Stomach (tissue), 19 donors: ENCODE measurements at regions of chr17 and their contacts with region 1.

Region 1: GRCh38 chr17:11296994-11297393 is 56.0 kb downstream of the SHISA6 start:
- DNase-seq: no peak
- H3K4me3 ChIP-seq: no peak overlapping the region
- H3K27ac ChIP-seq: no peak overlapping the region
- H3K4me1 ChIP-seq: no peaks in the 10 kb centered on the region
- H3K27me3 ChIP-seq: no peaks in the 10 kb centered on the region
- CTCF ChIP-seq: peak in 4 of 7 experiments; percentile 22 to 61 (median 42)
- EP300 ChIP-seq: no peak
- POLR2A ChIP-seq: no peak

Region 2: DNA sequence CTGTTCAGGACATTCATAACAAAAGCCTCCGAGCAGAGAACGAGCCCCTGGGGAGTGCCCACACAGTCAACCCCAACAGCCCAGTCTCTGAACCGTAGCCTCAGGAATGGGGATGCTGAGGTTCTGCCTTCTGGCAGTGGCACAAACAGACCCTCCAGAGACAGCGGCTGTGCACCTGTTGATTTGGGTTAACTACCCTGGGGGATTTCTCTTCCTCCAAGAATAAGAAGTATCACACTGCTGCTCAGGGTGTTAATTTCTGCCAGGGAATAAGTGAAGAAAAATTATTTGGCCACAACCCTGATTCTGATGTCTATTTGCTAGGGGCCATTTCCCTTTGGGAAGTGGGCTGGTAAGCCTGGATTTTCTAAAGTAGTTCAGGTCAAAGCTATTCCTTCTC is 408.1 kb before region 1 on chr17:
- intact Hi-C with region 1: loop called (anchors 10 kb)
- DNase-seq: no peak
- H3K4me3 ChIP-seq: no peak overlapping the region
- H3K27ac ChIP-seq: no peak overlapping the region
- H3K4me1 ChIP-seq: no peaks in the 10 kb centered on the region
- H3K27me3 ChIP-seq: no peaks in the 10 kb centered on the region
- CTCF ChIP-seq: no peak
- EP300 ChIP-seq: no peak
- POLR2A ChIP-seq: no peak

Region 3: DNA sequence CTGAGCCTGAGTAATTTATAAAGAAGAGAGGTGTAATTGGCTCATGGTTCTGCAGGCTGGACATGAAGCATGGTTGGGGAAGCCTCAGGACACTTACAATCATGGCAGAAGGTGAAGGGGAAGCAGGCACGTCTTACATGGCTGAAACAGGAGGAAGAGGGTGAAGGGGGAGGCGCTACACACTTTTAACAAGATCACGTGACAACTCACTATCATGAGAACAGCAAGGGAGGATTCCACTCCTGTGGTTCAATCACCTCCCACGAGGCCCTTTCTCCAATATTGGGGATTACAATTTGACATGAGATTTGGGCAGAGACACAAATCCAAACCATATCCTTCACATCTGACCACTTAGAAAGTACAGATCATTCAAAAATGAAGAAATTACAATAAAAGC is 166.6 kb before region 1 on chr17:
- intact Hi-C with region 1: loop called (anchors 5 kb)
- DNase-seq: no peak
- H3K4me3 ChIP-seq: no peak overlapping the region
- H3K27ac ChIP-seq: no peak overlapping the region
- H3K4me1 ChIP-seq: no peaks in the 10 kb centered on the region
- H3K27me3 ChIP-seq: no peaks in the 10 kb centered on the region
- CTCF ChIP-seq: no peak
- EP300 ChIP-seq: no peak
- POLR2A ChIP-seq: no peak

Region 4: DNA sequence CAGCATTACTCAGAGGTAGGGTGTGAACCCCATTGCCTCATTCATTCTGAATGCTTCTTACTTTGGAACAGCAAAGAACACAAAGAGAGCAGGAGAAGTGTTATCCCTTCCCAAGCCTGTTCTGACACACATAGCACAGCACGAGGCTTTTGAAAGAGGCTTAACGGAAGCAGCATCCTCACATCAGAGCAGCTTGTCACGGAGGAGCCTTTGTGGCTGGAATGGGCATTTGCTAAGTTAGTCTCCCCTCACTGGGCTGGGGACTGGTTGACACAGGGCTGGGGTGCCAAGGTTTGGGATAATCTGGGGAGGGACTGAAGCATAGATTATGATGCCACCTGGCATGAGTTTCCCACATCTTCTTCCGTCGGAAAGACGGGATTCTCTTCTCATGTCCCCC is 133.8 kb after region 1 on chr17:
- intact Hi-C with region 1: no loop called
- DNase-seq: no peak
- H3K4me3 ChIP-seq: no peak overlapping the region
- H3K27ac ChIP-seq: no peak overlapping the region
- H3K4me1 ChIP-seq: no peaks in the 10 kb centered on the region
- H3K27me3 ChIP-seq: no peaks in the 10 kb centered on the region
- CTCF ChIP-seq: no peak
- EP300 ChIP-seq: no peak
- POLR2A ChIP-seq: no peak